ENCODE measurements at regions of chr16 and their contacts with region 1.

Region 1: DNA sequence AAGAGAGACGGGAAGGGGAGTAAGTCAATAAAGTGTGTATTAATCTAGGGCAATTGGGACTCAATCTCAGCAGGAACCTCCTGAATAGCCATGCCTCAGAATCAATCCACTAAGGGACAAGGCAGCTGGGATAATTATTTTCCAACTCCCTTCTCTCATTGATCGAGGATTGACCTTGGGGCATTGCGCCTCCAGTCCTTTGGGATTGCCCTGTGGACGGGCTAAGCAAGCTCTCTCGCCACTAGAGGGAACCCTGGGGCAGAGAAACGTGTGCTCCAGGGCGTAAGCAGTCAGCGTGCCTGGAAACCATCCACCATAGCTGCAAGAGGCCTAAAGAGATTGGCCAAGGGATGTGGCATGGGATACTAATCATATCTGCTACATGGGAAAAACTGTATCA is 53.9 kb upstream of the ERCC4 start:
- DNase-seq: peak; percentile 73
- H3K4me3 ChIP-seq: no peak overlapping the region
- H3K27ac ChIP-seq: no peak overlapping the region
- H3K4me1 ChIP-seq: no peaks in the 10 kb centered on the region
- H3K27me3 ChIP-seq: peaks cover 0 to 2% of the 10 kb centered on the region in 2 experiments
- CTCF ChIP-seq: peak; percentile 65 to 81
- POLR2A ChIP-seq: no peak

Region 2: GRCh38 chr16:13896543-13897183 is 30.6 kb after region 1 on chr16:
- CTCF ChIA-PET with region 1: interaction called, 7 read pairs
- POLR2A ChIA-PET with region 1: no interaction called
- dilution Hi-C with region 1: no loop called
- intact Hi-C with region 1: loop called (anchors 2 kb)
- DNase-seq: no peak
- H3K4me3 ChIP-seq: no peak overlapping the region
- H3K27ac ChIP-seq: no peak overlapping the region
- H3K4me1 ChIP-seq: no peaks in the 10 kb centered on the region
- H3K27me3 ChIP-seq: peaks cover 2 to 3% of the 10 kb centered on the region in 2 experiments
- CTCF ChIP-seq: peak; percentile 25 to 34
- POLR2A ChIP-seq: no peak

Measured in endothelial cell of umbilical vein (primary cell).